HEK293 (cell line): ENCODE measurements at regions of chr1 and their contacts with region 1.

Region 1: GRCh38 chr1:24586970-24587820 is 31.3 kb downstream of the NCMAP start:
- H3K4me3 ChIP-seq: no peak overlapping the region
- H3K27ac ChIP-seq: no peak overlapping the region
- H3K4me1 ChIP-seq: no peaks in the 10 kb centered on the region
- CTCF ChIP-seq: peak; percentile 73

Region 2: GRCh38 chr1:23664837-23665795 is 922.1 kb before region 1 on chr1:
- CTCF ChIA-PET with region 1: no interaction called
- POLR2A ChIA-PET with region 1: no interaction called
- H3K4me3 ChIP-seq: no peak overlapping the region
- H3K27ac ChIP-seq: no peak overlapping the region
- H3K4me1 ChIP-seq: no peaks in the 10 kb centered on the region
- CTCF ChIP-seq: peak; percentile 47

Region 3: GRCh38 chr1:24415334-24415909 is 171.8 kb before region 1 on chr1 and contains the start of gene NIPAL3:
- CTCF ChIA-PET with region 1: interaction called, 18 read pairs
- POLR2A ChIA-PET with region 1: interaction called, 4 read pairs
- H3K4me3 ChIP-seq: peak within 1 kb of the TSS; percentile 49
- H3K27ac ChIP-seq: no peak within 1 kb of the TSS; the same call in 1 of the 2 replicates
- H3K4me1 ChIP-seq: peaks cover 6% of the 10 kb centered on the region
- CTCF ChIP-seq: peak; percentile 96

Region 4: GRCh38 chr1:24502709-24503058 is 84.5 kb before region 1 on chr1 and contains the start of gene RCAN3:
- CTCF ChIA-PET with region 1: interaction called, 11 read pairs
- POLR2A ChIA-PET with region 1: interaction called, 4 read pairs
- H3K4me3 ChIP-seq: peak within 1 kb of the TSS; percentile 80
- H3K27ac ChIP-seq: peak within 1 kb of the TSS; percentile 73
- H3K4me1 ChIP-seq: 0 out of 2 replicates have a peak, but pooled peaks cover 3% of the 10 kb centered on the region
- CTCF ChIP-seq: no peak

Region 5: GRCh38 chr1:24541711-24542346 is 45.4 kb before region 1 on chr1:
- CTCF ChIA-PET with region 1: interaction called, 69 read pairs
- POLR2A ChIA-PET with region 1: interaction called, 3 read pairs
- H3K4me3 ChIP-seq: no peak overlapping the region
- H3K27ac ChIP-seq: no peak overlapping the region
- H3K4me1 ChIP-seq: no peaks in the 10 kb centered on the region
- CTCF ChIP-seq: peak; percentile 54

Region 6: GRCh38 chr1:24558902-24559791 is 28.0 kb before region 1 on chr1:
- CTCF ChIA-PET with region 1: interaction called, 55 read pairs
- POLR2A ChIA-PET with region 1: no interaction called
- H3K4me3 ChIP-seq: no peak overlapping the region
- H3K27ac ChIP-seq: no peak overlapping the region
- H3K4me1 ChIP-seq: peaks cover 17% of the 10 kb centered on the region
- CTCF ChIP-seq: no peak

Region 7: GRCh38 chr1:24575915-24576587 is 11.1 kb before region 1 on chr1:
- CTCF ChIA-PET with region 1: interaction called, 43 read pairs
- POLR2A ChIA-PET with region 1: no interaction called
- H3K4me3 ChIP-seq: no peak overlapping the region
- H3K27ac ChIP-seq: no peak overlapping the region
- H3K4me1 ChIP-seq: no peaks in the 10 kb centered on the region
- CTCF ChIP-seq: no peak